ENCODE measurements at regions of chr2 and their contacts with region 1.

Region 1: DNA sequence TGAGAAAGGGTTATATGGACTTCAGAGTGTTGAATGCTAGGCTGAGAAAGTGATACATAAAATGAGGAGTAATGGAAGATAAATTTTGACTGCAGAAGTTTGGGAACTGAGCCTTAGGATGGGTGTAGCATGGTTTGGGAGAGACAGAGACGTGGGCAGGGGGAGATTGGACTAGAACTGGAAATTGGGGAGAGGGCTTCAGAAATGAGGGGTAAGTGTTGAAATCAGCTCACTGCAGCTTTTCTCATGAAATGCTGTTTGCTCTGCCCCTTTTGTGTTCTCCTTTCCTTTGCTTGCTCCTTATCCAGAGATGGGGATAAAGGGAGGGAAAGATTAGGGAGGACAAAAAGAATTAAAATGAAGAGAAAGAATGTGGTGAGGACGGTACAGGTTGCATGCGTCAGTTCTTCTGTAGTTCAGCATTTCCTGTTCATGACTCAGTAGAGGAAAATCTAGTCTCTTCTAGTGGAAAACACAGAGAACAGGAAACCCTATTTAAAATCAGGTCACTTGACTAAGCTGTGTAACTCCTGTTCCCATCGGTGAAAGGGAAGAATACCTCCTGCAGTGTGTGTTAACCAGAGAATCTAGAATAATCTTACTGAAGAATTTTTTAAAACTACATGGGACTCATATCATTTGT is 105.6 kb downstream of the CRIM1 start:
- DNase-seq: peak; percentile 88
- H3K4me3 ChIP-seq: no peak overlapping the region
- H3K27ac ChIP-seq: peak overlapping the region; percentile 83
- H3K4me1 ChIP-seq: peaks cover 43% of the 10 kb centered on the region
- H3K27me3 ChIP-seq: no peaks in the 10 kb centered on the region
- CTCF ChIP-seq: no peak

Region 2: DNA sequence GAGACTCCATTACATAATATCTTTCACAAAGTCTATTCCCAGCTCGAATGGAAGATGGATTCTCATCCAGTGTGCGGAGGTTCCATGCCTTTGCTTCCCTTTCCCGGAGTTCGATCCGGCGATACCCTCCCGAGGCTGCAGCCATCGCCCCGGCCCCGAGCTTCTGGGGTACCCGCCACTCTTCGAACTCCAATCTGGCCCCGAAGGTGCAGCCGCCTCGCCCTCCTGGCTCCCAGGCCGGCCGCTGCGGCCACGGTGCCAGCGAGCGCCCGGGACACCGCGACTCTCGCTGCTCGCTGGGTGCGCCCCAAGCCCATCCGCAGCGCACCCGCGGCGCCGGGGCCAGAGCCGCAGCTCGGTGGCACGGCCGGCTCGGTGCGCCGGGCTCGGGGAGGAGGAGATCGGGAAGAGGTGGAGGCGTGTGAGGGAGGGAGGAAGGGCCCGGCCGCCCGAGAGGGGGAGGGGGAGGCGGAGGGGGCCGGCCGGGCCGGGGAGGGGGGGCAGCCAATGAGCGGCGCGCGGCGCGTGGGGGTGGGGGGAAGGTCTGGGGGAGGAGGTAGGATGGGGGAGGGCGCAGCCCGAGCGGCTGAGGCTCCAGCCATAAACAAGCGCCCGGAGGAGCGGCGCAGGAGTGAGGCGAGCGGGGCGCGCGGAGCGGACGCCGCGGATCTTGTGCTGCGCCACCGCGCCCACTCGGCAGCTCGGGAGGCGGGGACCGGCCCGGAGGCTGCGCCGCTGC is 105.8 kb before region 1 on chr2 and contains the start of gene CRIM1:
- CTCF ChIA-PET with region 1: interaction called, 19 read pairs
- dilution Hi-C with region 1: no loop called
- in situ Hi-C with region 1: loop called (anchors 10 kb)
- intact Hi-C with region 1: loop called (anchors 1 kb)
- DNase-seq: peak; percentile 91
- H3K4me3 ChIP-seq: peak within 1 kb of the TSS; percentile 73 to 90 (median 87)
- H3K27ac ChIP-seq: peak within 1 kb of the TSS; percentile 80
- H3K4me1 ChIP-seq: peaks cover 29% of the 10 kb centered on the region
- H3K27me3 ChIP-seq: no peaks in the 10 kb centered on the region
- CTCF ChIP-seq: no peak
- total RNA-seq, gene CRIM1: 237 to 387 TPM

Region 3: GRCh38 chr2:36376319-36376765 is 84.8 kb before region 1 on chr2:
- CTCF ChIA-PET with region 1: interaction called, 5 read pairs
- dilution Hi-C with region 1: loop called (anchors 5 kb)
- in situ Hi-C with region 1: no loop called
- intact Hi-C with region 1: loop called (anchors 5 kb)
- DNase-seq: no peak
- H3K4me3 ChIP-seq: no peak overlapping the region
- H3K27ac ChIP-seq: peak overlapping the region; percentile 9
- H3K4me1 ChIP-seq: peaks cover 95% of the 10 kb centered on the region
- H3K27me3 ChIP-seq: no peaks in the 10 kb centered on the region
- CTCF ChIP-seq: no peak

Region 4: DNA sequence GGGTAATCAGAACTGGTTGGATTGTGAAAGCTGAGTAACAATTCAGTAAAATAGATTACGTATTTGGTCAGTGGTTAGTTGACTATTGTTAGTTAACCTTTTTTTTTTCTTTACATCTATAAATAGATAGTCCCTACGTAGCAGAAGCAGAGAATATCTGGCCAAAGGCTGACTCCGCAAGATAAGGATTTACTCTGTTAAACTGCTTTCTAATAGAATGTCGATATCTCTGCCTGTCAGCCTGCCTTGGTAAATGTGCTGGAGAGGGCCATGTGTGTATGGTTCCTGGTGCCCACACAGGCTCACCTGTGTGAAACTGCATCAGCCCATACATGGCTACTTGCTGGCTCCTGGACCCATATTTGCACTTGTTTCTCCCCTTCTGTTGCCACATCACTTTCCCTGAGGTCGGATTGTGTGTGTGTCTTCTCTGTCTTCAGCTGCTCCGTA is 11.2 kb before region 1 on chr2:
- CTCF ChIA-PET with region 1: interaction called, 11 read pairs
- dilution Hi-C with region 1: no loop called
- in situ Hi-C with region 1: no loop called
- intact Hi-C with region 1: no loop called
- DNase-seq: no peak
- H3K4me3 ChIP-seq: no peak overlapping the region
- H3K27ac ChIP-seq: peak overlapping the region; percentile 14
- H3K4me1 ChIP-seq: peaks cover 29% of the 10 kb centered on the region
- H3K27me3 ChIP-seq: no peaks in the 10 kb centered on the region
- CTCF ChIP-seq: no peak

Region 5: GRCh38 chr2:36507408-36507812 is 46.2 kb after region 1 on chr2:
- CTCF ChIA-PET with region 1: no interaction called
- dilution Hi-C with region 1: no loop called
- in situ Hi-C with region 1: no loop called
- intact Hi-C with region 1: loop called (anchors 1 kb)
- DNase-seq: peak; percentile 35
- H3K4me3 ChIP-seq: no peak overlapping the region
- H3K27ac ChIP-seq: no peak overlapping the region
- H3K4me1 ChIP-seq: no peaks in the 10 kb centered on the region
- H3K27me3 ChIP-seq: no peaks in the 10 kb centered on the region
- CTCF ChIP-seq: peak; percentile 86 to 89